Activated CD4-positive, alpha-beta T cell treated with anti-CD3 and anti-CD28 coated beads, Interleukin-2, amount 10 ng/mL, durations not matched to agents 24 days and 14 days (primary cell): ENCODE measurements at regions of chrX and their contacts with region 1.

Region 1: DNA sequence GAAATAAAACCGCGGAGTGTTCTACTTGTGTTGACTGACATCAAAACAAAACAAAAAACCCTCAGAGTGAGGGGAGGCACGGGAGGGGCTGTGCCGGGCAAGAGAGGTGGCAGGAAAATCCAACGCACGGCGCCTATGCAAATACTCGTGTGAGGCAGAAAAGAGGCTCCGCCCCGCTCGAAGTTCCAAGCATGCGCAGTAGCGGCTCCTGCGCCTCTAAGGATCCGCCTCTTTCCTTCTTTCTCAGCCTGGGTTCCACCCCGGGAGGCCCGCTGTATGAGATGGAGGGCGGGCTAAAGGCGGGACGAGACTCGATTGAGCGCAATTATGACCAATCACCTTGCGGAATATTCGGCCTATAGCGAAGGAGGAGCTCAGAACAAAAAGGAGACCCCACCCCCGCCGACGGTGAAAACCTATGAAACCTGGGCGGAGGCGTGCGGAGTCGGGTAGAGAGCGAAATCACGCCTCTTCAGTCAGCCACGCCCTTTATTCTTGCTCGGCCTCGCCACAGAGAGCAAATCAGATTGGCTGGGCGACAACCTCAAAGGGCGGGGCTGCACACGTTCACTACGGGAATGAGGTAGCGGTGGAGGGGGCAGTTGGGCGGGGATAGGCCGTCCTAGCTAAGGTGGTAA is 720 bp upstream of the CDK16 start:
- DNase-seq: peak; percentile 98
- H3K4me3 Mint-ChIP-seq: peak overlapping the region; percentile 92
- H3K27ac Mint-ChIP-seq: peak overlapping the region; percentile 99
- H3K4me1 Mint-ChIP-seq: peaks cover 37% of the 10 kb centered on the region
- H3K27me3 Mint-ChIP-seq: no peaks in the 10 kb centered on the region

Region 2: GRCh38 chrX:47311932-47312774 is 94.4 kb after region 1 on chrX:
- intact Hi-C with region 1: loop called (anchors 1 kb)
- DNase-seq: peak; percentile 77
- H3K4me3 Mint-ChIP-seq: no peak overlapping the region
- H3K27ac Mint-ChIP-seq: no peak overlapping the region
- H3K4me1 Mint-ChIP-seq: no peaks in the 10 kb centered on the region
- H3K27me3 Mint-ChIP-seq: no peaks in the 10 kb centered on the region

Region 3: DNA sequence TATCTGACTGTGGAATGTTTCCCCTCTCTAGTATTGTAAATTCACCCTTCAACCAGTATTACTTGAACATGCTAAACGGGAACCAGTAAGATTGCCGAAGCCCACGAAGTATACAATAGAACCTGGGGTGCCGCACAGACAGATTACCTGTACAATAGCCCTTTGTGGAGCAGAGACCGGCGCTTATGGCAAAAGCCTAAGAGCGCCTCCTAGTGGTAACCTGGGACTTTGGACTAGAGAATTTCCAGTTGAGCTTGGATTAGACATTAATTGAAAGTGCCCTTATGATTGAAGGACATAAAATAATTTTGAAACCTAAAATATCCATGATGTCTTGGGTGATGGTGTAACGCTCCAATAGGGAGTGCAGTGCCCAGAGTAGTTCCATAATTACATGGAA is 166.7 kb after region 1 on chrX:
- intact Hi-C with region 1: loop called (anchors 5 kb)
- DNase-seq: peak; percentile 90
- H3K4me3 Mint-ChIP-seq: no peak overlapping the region
- H3K27ac Mint-ChIP-seq: no peak overlapping the region
- H3K4me1 Mint-ChIP-seq: peaks cover 8% of the 10 kb centered on the region
- H3K27me3 Mint-ChIP-seq: no peaks in the 10 kb centered on the region